Heart right ventricle (tissue), 16 donors: ENCODE measurements at regions of chr20 and their contacts with region 1.

Region 1: DNA sequence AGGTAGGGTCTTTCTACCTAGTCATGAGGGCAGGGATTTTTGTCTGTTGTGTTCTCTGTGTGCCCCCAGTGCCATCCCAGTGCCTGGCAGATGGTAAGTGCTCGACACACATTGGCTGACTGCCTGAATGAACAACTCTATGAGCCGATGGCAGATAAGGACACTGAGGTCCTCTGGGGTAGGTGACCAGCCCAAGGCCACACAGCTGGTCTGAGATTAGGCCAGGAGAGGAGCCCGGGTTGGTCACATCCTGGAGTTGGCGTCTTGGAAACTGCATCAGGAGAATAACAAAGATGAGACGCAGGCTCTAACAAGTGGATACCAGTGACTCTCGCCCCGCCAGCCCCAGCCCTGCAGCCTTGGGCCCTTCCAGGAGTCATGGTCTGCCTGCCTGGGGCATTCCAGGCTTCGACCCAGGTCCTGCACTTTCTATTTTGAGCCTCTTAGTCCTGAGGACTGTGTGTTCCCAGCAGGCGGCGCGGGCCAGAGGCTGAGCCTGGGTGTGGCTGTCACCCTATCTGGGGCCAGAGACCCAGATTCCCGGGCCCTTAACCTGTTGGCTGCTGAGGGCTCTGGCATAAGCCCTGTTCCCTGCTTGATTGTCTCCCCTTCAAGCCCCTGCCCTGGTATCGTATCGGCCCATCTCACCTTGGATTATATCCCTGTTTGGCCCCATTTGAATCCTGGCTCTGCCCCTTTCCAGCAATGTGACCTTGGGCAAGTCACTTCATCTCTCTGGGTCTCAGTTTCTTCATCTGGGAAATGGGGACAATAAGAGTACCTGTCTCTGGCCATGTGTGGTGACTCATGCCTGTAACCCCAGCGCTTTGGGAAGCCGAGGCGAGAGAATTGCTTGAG is 88.3 kb downstream of the CEBPB start:
- DNase-seq: peak; percentile 74 to 84
- ATAC-seq: peak; percentile 63 to 88 (median 84)
- H3K4me3 ChIP-seq: peak overlapping the region in 1 of 10 donors; percentile 42
- H3K27ac ChIP-seq: peak overlapping the region; percentile 64 to 96 (median 76)
- H3K4me1 ChIP-seq: peaks cover 7 to 81% (median 26%) of the 10 kb centered on the region in 9 donors
- H3K27me3 ChIP-seq: no peaks in the 10 kb centered on the region
- CTCF ChIP-seq: peak in 8 of 9 donors; percentile 10 to 58 (median 46)

Region 2: GRCh38 chr20:50317609-50318008 is 38.7 kb after region 1 on chr20:
- intact Hi-C with region 1: loop called in 1 of 10 experiments (anchors 5 kb)
- DNase-seq: no peak
- ATAC-seq: no peak
- H3K4me3 ChIP-seq: no peak overlapping the region
- H3K27ac ChIP-seq: no peak overlapping the region
- H3K4me1 ChIP-seq: peaks cover 2 to 42% (median 30%) of the 10 kb centered on the region in 9 donors
- H3K27me3 ChIP-seq: no peaks in the 10 kb centered on the region
- CTCF ChIP-seq: no peak